ENCODE measurements at regions of chr19 and their contacts with region 1.

Region 1: DNA sequence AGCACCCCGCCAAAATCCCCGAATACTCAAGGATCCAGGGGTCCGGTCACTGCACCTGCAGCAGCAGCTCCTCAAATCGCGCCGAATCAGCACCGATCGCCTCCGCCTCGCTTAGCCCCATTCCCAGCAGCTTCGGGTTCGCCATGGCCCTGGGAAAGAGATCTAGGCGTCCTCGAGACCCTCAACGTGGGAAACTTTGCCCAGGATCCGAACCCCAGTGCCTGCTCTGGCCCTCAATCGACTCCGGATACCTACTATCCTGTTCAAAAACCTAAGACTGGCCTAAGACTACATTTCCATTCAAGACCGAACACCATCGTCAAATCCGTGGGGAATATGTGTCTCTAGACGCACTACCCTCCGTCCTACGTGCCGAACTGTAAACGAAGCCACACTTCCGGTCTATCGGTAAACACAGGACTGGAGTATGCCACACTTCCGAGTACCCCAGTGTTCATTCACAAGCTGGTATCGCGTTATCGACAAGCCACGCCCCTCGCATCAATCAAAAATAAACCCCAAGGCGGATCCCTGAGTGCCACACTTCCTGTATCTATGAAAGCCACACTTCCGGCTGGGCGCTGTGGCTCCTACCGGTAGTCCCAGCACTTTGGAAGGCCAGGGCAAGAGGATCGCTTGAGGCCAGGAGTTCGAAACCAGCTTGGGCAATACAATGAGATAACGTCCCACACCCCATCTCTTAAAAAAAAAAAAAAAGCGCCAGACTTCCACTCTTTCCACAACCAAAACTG is at the start of gene PIH1D1:
- DNase-seq: peak; percentile 86 to 99 (median 94)
- ATAC-seq: peak; percentile 66
- H3K4me3 ChIP-seq: peak within 1 kb of the TSS; percentile 87 to 94
- H3K4me3 Mint-ChIP-seq: peak within 1 kb of the TSS; percentile 99
- H3K27ac ChIP-seq: peak within 1 kb of the TSS; percentile 89 to 96
- H3K27ac Mint-ChIP-seq: peak within 1 kb of the TSS; percentile 99
- H3K4me1 ChIP-seq: peaks cover 31% of the 10 kb centered on the region
- H3K4me1 Mint-ChIP-seq: peaks cover 50% of the 10 kb centered on the region
- H3K27me3 ChIP-seq: no peaks in the 10 kb centered on the region
- H3K27me3 Mint-ChIP-seq: no peaks in the 10 kb centered on the region
- CTCF ChIP-seq: no peak
- total RNA-seq, gene PIH1D1: 113 to 119 TPM

Region 2: GRCh38 chr19:49468746-49469447 is 17.3 kb after region 1 on chr19:
- CTCF ChIA-PET with region 1: interaction called, 25 read pairs
- POLR2A ChIA-PET with region 1: interaction called, 52 read pairs
- intact Hi-C with region 1: loop called (anchors 1 kb)
- DNase-seq: peak; percentile 73 to 98 (median 91)
- ATAC-seq: peak; percentile 70
- H3K4me3 ChIP-seq: peak overlapping the region in 1 of 2 experiments; percentile 9
- H3K4me3 Mint-ChIP-seq: peak overlapping the region; percentile 69
- H3K27ac ChIP-seq: peak overlapping the region; percentile 88 to 90
- H3K27ac Mint-ChIP-seq: peak overlapping the region; percentile 99
- H3K4me1 ChIP-seq: peaks cover 55% of the 10 kb centered on the region
- H3K4me1 Mint-ChIP-seq: peaks cover 44% of the 10 kb centered on the region
- H3K27me3 ChIP-seq: no peaks in the 10 kb centered on the region
- H3K27me3 Mint-ChIP-seq: no peaks in the 10 kb centered on the region
- CTCF ChIP-seq: no peak

Region 3: DNA sequence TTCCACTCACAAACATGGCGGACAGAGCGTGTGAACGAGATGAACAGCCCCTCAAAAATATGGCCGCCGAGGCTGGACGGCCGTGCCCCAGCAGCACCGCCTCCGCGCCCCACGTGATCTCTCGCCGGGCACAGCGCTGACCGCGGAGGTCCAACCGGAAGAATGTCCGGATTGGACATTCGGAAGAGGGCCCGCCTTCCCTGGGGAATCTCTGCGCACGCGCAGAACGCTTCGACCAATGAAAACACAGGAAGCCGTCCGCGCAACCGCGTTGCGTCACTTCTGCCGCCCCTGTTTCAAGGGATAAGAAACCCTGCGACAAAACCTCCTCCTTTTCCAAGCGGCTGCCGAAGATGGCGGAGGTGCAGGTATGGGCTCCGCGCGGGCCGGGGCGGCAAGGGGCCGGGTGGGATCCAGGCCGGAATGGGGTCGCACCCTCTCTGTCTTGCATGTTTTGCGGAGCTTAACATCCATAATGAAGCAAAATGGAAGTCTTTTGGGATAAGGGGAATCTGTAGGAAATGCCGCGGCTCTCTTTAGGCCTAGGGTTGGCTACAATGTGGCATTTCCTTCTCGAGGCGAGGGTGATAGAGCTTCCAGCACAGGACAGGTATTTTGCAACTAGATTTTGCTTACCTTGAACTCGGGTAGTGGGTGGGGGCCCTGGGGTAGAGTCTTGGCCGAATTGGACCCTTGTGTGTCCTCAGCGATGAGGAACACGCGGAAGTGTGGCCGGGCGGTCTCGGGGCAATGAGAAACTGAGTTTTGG is 35.9 kb after region 1 on chr19 and contains the start of gene RPL13A:
- CTCF ChIA-PET with region 1: interaction called, 4 read pairs
- POLR2A ChIA-PET with region 1: interaction called, 11 read pairs
- intact Hi-C with region 1: loop called (anchors 1 kb)
- DNase-seq: peak; percentile 99 to 100 (median 99)
- ATAC-seq: peak; percentile 85
- H3K4me3 ChIP-seq: peak within 1 kb of the TSS; percentile 93 to 96
- H3K4me3 Mint-ChIP-seq: peak within 1 kb of the TSS; percentile 97
- H3K27ac ChIP-seq: peak within 1 kb of the TSS; percentile 91
- H3K27ac Mint-ChIP-seq: peak within 1 kb of the TSS; percentile 92
- H3K4me1 ChIP-seq: peaks cover 39% of the 10 kb centered on the region
- H3K4me1 Mint-ChIP-seq: peaks cover 50% of the 10 kb centered on the region
- H3K27me3 ChIP-seq: no peaks in the 10 kb centered on the region
- H3K27me3 Mint-ChIP-seq: no peaks in the 10 kb centered on the region
- CTCF ChIP-seq: no peak
- total RNA-seq, gene RPL13A: 5,165 to 5,323 TPM

Region 4: GRCh38 chr19:49555600-49556411 is 104.2 kb after region 1 on chr19:
- CTCF ChIA-PET with region 1: no interaction called
- POLR2A ChIA-PET with region 1: no interaction called
- intact Hi-C with region 1: loop called in 1 of 2 experiments (anchors 1 kb)
- DNase-seq: peak; percentile 66 to 90 (median 77)
- ATAC-seq: peak; percentile 75
- H3K4me3 ChIP-seq: peak overlapping the region; percentile 59 to 78
- H3K4me3 Mint-ChIP-seq: peak overlapping the region; percentile 58
- H3K27ac ChIP-seq: peak overlapping the region; percentile 28 to 34
- H3K27ac Mint-ChIP-seq: peak overlapping the region; percentile 95
- H3K4me1 ChIP-seq: peaks cover 88% of the 10 kb centered on the region
- H3K4me1 Mint-ChIP-seq: peaks cover 74% of the 10 kb centered on the region
- H3K27me3 ChIP-seq: no peaks in the 10 kb centered on the region
- H3K27me3 Mint-ChIP-seq: no peaks in the 10 kb centered on the region
- CTCF ChIP-seq: no peak

Region 5: GRCh38 chr19:49640113-49640898 is 188.7 kb after region 1 on chr19 and contains the start of gene RRAS:
- CTCF ChIA-PET with region 1: no interaction called
- POLR2A ChIA-PET with region 1: interaction called, 4 read pairs
- intact Hi-C with region 1: loop called (anchors 1 to 2 kb)
- DNase-seq: peak; percentile 98 to 100 (median 99)
- ATAC-seq: peak; percentile 66
- H3K4me3 ChIP-seq: peak within 1 kb of the TSS; percentile 64 to 75
- H3K4me3 Mint-ChIP-seq: peak within 1 kb of the TSS; percentile 95
- H3K27ac ChIP-seq: peak within 1 kb of the TSS; percentile 64 to 98
- H3K27ac Mint-ChIP-seq: peak within 1 kb of the TSS; percentile 96
- H3K4me1 ChIP-seq: peaks cover 51% of the 10 kb centered on the region
- H3K4me1 Mint-ChIP-seq: peaks cover 58% of the 10 kb centered on the region
- H3K27me3 ChIP-seq: no peaks in the 10 kb centered on the region
- H3K27me3 Mint-ChIP-seq: no peaks in the 10 kb centered on the region
- CTCF ChIP-seq: no peak
- total RNA-seq, gene RRAS: 3.6 to 4.9 TPM

Region 6: GRCh38 chr19:49869441-49870176 is 418.0 kb after region 1 on chr19:
- CTCF ChIA-PET with region 1: no interaction called
- POLR2A ChIA-PET with region 1: no interaction called
- intact Hi-C with region 1: loop called in 1 of 2 experiments (anchors 2 kb)
- DNase-seq: peak; percentile 81 to 98 (median 89)
- ATAC-seq: peak; percentile 75
- H3K4me3 ChIP-seq: peak overlapping the region; percentile 73 to 85
- H3K4me3 Mint-ChIP-seq: no peak overlapping the region
- H3K27ac ChIP-seq: peak overlapping the region; percentile 64 to 96
- H3K27ac Mint-ChIP-seq: no peak overlapping the region
- H3K4me1 ChIP-seq: peaks cover 36% of the 10 kb centered on the region
- H3K4me1 Mint-ChIP-seq: peaks cover 41% of the 10 kb centered on the region
- H3K27me3 ChIP-seq: no peaks in the 10 kb centered on the region
- H3K27me3 Mint-ChIP-seq: no peaks in the 10 kb centered on the region
- CTCF ChIP-seq: no peak

Measured in CD8-positive, alpha-beta T cell (primary cell).